ENCODE measurements at regions of chr13 and their contacts with region 1.

Region 1: GRCh38 chr13:37602747-37603381 is 4.3 kb upstream of the POSTN start:
- DNase-seq: no peak
- H3K4me3 ChIP-seq: no peak overlapping the region
- H3K27ac ChIP-seq: no peak overlapping the region
- H3K27me3 ChIP-seq: no peaks in the 10 kb centered on the region
- CTCF ChIP-seq: peak; percentile 62

Region 2: DNA sequence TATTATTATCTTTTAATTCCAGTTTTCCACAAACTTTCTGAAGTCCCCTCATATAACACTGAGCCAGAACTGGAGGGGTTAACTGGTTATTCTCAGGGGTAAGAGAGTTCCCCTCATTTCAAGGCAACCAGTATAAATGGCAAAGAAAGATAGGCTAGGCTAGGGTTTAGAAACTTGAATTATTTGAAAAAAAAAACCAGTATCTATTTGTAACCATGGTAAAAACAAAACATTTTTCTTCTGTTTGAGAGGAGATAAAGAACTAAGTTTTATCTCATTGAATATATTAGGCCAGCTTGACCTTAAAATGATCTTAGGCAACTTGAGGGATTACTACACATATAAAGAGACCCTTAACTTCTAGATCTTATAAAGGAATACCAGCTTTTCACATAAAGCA is 563.0 kb before region 1 on chr13:
- CTCF ChIA-PET with region 1: no interaction called
- POLR2A ChIA-PET with region 1: no interaction called
- DNase-seq: no peak
- H3K4me3 ChIP-seq: no peak overlapping the region
- H3K27ac ChIP-seq: no peak overlapping the region
- H3K27me3 ChIP-seq: no peaks in the 10 kb centered on the region
- CTCF ChIP-seq: no peak

Region 3: DNA sequence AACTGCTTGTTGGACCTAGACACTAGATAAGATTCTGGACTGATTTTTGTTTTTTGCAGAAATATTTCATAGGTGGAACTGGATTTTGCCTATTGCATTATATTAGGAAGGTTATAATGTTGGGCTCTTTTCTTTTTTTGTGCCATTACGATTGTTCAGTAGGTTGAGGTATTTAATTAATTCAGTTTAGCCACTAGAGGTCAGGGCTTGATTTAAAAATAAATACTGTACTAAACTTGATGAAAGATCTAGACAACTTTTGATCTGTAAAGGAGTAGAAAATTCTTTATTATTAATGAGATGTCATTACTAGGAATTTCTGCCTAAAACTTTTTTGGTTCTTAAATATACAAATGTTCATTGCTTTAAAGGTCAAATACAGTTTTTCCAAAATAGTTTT is 528.2 kb before region 1 on chr13:
- CTCF ChIA-PET with region 1: interaction called, 65 read pairs
- POLR2A ChIA-PET with region 1: no interaction called
- DNase-seq: no peak
- H3K4me3 ChIP-seq: no peak overlapping the region
- H3K27ac ChIP-seq: no peak overlapping the region
- H3K27me3 ChIP-seq: no peaks in the 10 kb centered on the region
- CTCF ChIP-seq: peak; percentile 42

Region 4: DNA sequence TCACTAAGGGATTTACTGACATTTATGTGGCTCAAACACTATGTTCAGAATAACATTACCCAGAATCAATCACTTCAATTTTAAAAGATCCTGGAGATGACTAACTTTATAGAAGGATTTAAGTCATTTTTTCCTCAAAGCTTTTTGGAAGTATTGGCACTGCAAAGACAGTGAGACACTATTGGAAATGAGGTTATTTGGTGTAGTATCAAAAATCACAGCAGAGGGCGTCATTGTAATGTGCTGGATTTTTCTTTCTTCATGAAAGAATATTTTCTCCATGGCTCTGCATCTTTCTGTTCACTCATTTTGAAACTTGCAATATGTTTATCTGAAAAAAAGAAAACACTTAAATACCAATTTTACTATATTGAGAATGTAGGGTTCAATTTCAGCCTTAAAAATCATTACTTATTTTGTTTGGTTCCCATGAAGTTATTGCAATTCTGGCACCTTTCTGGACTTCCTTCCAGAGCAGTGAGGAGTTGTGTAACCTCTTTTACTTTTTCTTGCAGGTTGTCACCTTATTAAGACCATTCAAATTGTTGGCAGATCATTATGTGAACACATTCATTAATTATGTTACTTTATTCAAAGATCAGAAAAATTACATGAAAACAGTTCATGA is 493.7 kb before region 1 on chr13:
- CTCF ChIA-PET with region 1: interaction called, 69 read pairs
- POLR2A ChIA-PET with region 1: no interaction called
- DNase-seq: peak; percentile 10
- H3K4me3 ChIP-seq: no peak overlapping the region
- H3K27ac ChIP-seq: no peak overlapping the region
- H3K27me3 ChIP-seq: no peaks in the 10 kb centered on the region
- CTCF ChIP-seq: peak; percentile 77

Region 5: DNA sequence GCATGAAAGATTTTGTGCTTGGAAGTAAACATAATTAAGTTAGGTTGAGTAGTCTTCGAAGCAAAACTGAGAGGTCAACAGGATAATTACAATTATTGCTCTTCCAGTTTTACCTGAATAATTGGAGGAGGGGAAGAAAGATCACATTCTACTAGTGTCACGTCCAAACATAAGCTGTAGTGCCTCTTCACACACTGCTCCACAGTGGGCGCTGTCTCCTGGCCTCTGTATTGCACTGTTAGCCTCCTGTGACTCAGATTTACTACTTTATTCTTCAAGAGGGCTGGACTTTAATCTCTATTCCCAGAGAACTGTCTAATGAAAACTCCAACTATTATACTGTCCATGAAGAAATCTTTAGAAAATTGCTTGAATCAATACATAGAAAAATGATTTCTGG is 203.8 kb after region 1 on chr13:
- CTCF ChIA-PET with region 1: no interaction called
- POLR2A ChIA-PET with region 1: no interaction called
- DNase-seq: no peak
- H3K4me3 ChIP-seq: no peak overlapping the region
- H3K27ac ChIP-seq: no peak overlapping the region
- H3K27me3 ChIP-seq: no peaks in the 10 kb centered on the region
- CTCF ChIP-seq: no peak

Region 6: DNA sequence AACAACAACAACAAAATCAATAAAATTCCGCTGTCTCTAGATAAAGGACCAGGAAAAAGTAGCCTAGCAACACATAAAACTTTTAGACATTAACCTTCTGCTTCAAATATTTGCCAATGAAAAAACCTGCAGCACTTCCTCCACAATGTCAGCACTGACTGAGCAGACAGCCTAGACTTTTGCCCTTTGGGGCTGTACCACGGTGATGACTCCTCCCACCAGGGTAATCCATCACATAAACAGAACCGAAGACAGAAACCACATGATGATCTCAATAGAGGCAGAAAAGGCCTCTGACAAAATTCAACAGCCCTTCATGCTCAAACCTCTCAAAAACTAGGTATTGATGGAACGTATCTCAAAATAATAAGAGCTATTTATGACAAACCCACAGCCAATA is 296.9 kb after region 1 on chr13:
- CTCF ChIA-PET with region 1: no interaction called
- POLR2A ChIA-PET with region 1: no interaction called
- DNase-seq: no peak
- H3K4me3 ChIP-seq: no peak overlapping the region
- H3K27ac ChIP-seq: no peak overlapping the region
- H3K27me3 ChIP-seq: no peaks in the 10 kb centered on the region
- CTCF ChIP-seq: no peak

Region 7: DNA sequence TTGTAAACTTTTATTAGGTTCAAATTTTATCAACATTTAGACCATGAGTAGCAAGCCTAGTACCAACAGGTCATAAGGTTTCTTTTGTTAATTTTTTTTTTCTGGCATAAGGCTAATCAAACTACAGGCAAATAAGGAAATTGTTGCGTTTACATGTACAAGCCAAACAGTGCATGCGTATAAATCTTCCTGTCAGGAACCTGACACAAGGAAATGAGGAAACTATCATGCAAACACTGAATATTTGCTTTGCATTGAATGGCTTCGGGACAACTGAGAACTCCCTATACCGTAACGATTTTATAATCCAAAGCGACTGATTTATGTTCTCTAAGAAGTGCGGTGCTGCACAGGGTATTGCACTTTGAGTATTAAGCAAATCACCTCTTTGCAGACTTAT is 399.7 kb after region 1 on chr13:
- CTCF ChIA-PET with region 1: no interaction called
- POLR2A ChIA-PET with region 1: no interaction called
- DNase-seq: no peak
- H3K4me3 ChIP-seq: no peak overlapping the region
- H3K27ac ChIP-seq: no peak overlapping the region
- H3K27me3 ChIP-seq: no peaks in the 10 kb centered on the region
- CTCF ChIP-seq: no peak